Activated naive CD4-positive, alpha-beta T cell treated with anti-CD3 and anti-CD28 coated beads for 36 hours (primary cell): ENCODE measurements at regions of chr20 and their contacts with region 1.

Region 1: GRCh38 chr20:43955062-43955749 is 40.6 kb downstream of the TOX2 start:
- DNase-seq: peak; percentile 76
- H3K4me3 Mint-ChIP-seq: no peak overlapping the region
- H3K27ac Mint-ChIP-seq: peak overlapping the region; percentile 62
- H3K4me1 Mint-ChIP-seq: peaks cover 72% of the 10 kb centered on the region
- H3K27me3 Mint-ChIP-seq: peaks cover 9% of the 10 kb centered on the region

Region 2: DNA sequence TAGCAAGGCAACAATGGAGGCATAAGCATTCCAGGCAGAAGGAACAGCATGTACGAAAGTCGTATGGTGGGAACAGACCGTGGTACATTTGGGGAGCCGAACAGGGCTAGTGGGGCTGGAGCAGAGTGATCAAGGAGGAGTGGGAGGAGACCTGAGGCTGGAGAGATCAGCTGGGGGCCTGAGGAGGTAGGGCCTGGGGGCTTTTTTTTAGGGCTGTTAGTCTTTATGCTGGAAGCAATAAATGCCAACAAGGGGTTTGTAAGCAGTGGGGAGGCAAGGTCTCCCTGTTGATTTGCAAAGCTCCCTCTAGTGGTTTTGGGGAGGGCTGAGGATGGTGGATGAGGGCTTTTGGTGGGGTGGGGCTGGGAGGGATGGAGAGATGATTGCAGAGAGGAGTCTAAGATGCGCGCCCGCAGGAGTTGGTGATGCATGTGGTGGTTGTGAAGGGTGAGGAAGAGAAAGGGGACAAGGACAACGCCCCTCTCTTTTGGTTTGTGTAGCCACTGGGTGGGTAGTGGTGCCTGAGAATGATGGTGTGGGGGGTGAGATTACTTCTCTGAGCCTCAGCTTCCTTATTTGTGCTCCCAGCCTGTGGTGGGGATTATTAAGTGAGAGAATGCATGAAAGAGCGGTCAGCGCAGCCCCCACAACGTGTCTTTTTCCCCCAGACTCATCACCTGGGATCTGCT is 114.7 kb before region 1 on chr20:
- CTCF ChIA-PET with region 1: no interaction called
- intact Hi-C with region 1: loop called (anchors 2 kb)
- DNase-seq: peak; percentile 60
- H3K4me3 Mint-ChIP-seq: no peak overlapping the region
- H3K27ac Mint-ChIP-seq: no peak overlapping the region
- H3K4me1 Mint-ChIP-seq: peaks cover 16% of the 10 kb centered on the region
- H3K27me3 Mint-ChIP-seq: no peaks in the 10 kb centered on the region

Region 3: GRCh38 chr20:43914311-43915210 is 40.6 kb before region 1 on chr20 and contains the start of gene TOX2:
- CTCF ChIA-PET with region 1: interaction called, 3 read pairs
- intact Hi-C with region 1: loop called (anchors 2 kb)
- DNase-seq: peak; percentile 39
- H3K4me3 Mint-ChIP-seq: peak within 1 kb of the TSS; percentile 73
- H3K27ac Mint-ChIP-seq: no peak within 1 kb of the TSS
- H3K4me1 Mint-ChIP-seq: peaks cover 32% of the 10 kb centered on the region
- H3K27me3 Mint-ChIP-seq: peaks cover 43% of the 10 kb centered on the region
- total RNA-seq, gene TOX2: 1.2 to 1.6 TPM

Region 4: DNA sequence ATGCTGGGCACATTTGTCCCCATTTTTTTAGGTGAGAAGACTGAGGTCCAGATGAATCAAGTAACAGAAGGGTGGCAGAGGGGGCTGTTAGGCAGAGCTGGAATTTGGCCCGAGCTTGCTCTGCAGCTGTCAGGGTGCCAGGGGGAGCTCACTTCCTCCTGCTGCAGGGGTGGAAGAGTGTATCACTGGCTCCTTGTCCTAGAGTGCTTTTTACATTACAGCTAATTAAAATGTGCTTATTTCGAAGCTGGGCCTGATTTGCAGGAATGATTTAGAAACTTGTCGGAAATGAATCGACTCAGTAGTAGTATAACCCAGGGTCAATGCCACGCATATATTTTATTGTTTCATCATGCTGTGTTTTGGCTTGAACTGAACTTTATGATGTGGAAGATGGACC is 29.4 kb before region 1 on chr20:
- CTCF ChIA-PET with region 1: interaction called, 8 read pairs
- intact Hi-C with region 1: loop called (anchors 2 kb)
- DNase-seq: peak; percentile 60
- H3K4me3 Mint-ChIP-seq: no peak overlapping the region
- H3K27ac Mint-ChIP-seq: no peak overlapping the region
- H3K4me1 Mint-ChIP-seq: peaks cover 43% of the 10 kb centered on the region
- H3K27me3 Mint-ChIP-seq: peaks cover 9% of the 10 kb centered on the region

Region 5: DNA sequence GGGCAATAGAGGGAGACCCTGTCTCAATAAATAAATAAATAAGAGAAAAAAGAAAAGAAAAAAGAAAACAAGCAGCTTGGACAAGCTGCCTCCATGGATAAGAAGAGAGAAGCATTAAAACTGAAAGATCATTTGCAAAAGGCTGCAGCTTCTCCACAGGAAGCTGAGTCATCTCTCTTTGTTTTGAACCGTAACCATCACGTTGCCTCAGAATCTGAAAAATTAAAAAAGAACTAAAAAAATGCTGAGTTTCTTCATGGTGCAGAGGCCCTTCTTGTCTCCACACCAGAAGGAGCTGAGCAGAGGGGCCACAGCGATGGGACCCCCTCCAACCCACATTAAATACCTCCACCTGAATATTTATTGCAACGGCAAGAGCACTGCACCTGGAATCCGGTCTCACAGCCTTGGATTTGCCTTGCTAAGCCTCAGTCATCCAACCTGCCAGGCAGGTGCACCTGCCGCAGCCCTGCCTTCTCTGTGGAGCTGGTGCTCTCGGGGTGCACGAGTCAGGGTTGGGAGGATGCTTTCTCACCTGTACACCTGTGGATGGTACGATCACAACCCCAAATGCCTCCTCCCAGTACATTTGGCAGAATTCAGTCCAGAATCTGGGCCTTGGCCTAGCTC is 12.4 kb before region 1 on chr20:
- CTCF ChIA-PET with region 1: interaction called, 7 read pairs
- intact Hi-C with region 1: loop called (anchors 1 kb)
- DNase-seq: peak; percentile 33
- H3K4me3 Mint-ChIP-seq: no peak overlapping the region
- H3K27ac Mint-ChIP-seq: peak overlapping the region; percentile 77
- H3K4me1 Mint-ChIP-seq: peaks cover 41% of the 10 kb centered on the region
- H3K27me3 Mint-ChIP-seq: peaks cover 8% of the 10 kb centered on the region

Region 6: DNA sequence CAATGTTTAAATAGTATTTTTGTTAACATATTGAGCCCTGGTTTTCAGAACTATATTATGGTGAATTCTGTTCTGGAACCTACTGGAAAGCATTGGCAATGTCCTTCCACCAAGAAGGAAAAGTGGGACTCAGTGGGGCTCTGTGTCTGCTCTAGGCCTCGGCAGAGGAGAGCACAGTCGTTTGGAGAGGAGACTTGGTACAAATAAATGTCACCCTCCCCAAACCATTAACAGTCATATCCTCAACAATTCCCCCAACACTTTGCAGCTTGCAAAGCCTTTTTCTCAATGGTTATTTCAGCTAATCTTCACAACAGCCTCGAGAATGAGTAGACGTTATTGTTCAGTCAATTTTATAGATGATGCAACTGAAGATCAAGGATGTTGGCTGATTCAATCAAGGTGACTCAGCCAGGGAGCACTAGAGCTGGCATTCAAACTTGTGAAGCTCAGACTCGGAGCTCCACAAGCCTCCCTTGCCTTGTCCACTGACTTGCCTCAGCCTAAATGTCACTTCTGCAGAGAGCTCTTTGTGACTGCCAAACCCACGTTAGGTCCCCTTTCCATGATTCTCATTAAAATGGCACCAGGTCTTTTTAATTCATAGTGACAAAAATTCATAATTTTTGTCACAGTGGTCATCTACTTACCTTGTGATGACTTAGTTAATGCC is 20.0 kb after region 1 on chr20:
- CTCF ChIA-PET with region 1: no interaction called
- intact Hi-C with region 1: loop called (anchors 1 kb)
- DNase-seq: peak; percentile 66
- H3K4me3 Mint-ChIP-seq: no peak overlapping the region
- H3K27ac Mint-ChIP-seq: peak overlapping the region; percentile 66
- H3K4me1 Mint-ChIP-seq: peaks cover 25% of the 10 kb centered on the region
- H3K27me3 Mint-ChIP-seq: no peaks in the 10 kb centered on the region

Region 7: GRCh38 chr20:44018259-44018941 is 63.2 kb after region 1 on chr20:
- CTCF ChIA-PET with region 1: interaction called, 5 read pairs
- intact Hi-C with region 1: loop called (anchors 2 kb)
- DNase-seq: no peak
- H3K4me3 Mint-ChIP-seq: no peak overlapping the region
- H3K27ac Mint-ChIP-seq: no peak overlapping the region
- H3K4me1 Mint-ChIP-seq: peaks cover 23% of the 10 kb centered on the region
- H3K27me3 Mint-ChIP-seq: no peaks in the 10 kb centered on the region